Endothelial cell of umbilical vein (primary cell): ENCODE measurements at regions of chr19 and their contacts with region 1.

Region 1: DNA sequence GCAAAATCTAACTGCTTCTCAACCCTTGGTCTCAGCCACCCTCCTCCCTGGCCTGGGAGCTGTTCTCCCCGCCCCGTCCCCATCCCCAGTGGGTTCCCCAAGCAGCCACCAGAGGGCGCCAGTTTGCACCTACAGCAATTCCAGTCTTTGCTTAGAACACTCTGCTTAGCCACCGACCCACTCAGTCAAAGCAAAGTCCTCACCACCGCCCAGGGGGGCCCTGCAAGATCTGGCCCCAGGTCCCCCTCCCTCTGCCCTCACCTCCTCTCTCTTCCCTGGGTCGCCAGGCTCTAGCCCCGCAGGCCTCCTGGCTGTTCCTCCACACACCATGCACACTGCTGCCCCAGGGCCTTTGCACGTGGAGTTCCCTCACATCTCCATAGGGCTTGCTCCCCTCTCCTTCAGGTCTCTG is 12.4 kb downstream of the TMEM143 start:
- DNase-seq: peak; percentile 57
- H3K4me3 ChIP-seq: no peak overlapping the region
- H3K27ac ChIP-seq: no peak overlapping the region
- H3K4me1 ChIP-seq: no peaks in the 10 kb centered on the region
- H3K27me3 ChIP-seq: no peaks in the 10 kb centered on the region
- CTCF ChIP-seq: peak; percentile 82 to 90
- POLR2A ChIP-seq: no peak

Region 2: DNA sequence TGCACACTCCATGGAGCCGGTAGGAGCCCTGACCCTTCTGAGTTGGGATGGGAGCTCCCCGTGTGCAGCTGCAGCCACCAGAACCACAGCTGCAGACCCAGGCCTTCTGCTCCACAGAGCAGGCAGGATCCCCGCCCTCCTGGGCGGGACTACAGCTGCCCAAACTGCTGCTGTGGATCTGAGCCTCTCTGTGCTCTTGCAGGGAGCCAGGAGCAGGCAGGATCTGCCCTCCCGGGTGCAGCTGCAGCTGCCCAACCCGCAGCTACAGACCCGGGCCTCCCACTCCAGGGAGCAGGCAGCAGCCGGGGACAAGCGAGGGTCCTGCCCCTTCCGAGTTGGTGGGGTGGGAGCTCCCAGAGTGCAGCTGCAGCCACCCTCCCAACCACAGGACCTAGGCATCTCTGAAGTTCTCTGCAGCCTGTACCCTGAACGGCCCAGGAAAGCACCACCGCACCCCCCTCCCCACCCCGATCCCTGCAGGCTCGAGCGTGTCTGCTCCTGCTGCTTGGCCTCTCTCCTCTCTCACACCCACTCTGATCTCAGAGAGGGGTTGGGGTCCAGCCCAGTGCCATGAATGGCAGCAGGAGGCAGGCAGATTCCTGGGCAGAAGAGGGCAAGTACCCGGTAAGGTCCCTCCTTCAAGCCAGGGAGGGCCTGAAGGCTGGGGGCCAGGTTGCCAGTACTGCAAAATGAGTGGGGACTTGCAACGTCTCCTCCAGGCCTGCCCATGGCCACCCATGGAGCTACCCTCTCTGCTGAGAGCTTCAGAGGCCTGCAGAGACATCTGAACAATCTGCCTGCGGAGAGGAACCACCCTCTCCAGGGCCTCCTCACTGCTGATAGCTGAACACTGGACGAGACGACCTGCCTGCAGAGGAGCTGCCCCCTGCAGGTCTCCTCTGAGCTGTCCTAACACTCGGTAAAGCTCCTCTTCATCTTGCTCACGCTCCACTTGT is 42.4 kb before region 1 on chr19:
- CTCF ChIA-PET with region 1: interaction called, 12 read pairs
- POLR2A ChIA-PET with region 1: no interaction called
- dilution Hi-C with region 1: no loop called
- intact Hi-C with region 1: no loop called
- DNase-seq: peak; percentile 25
- H3K4me3 ChIP-seq: no peak overlapping the region
- H3K27ac ChIP-seq: no peak overlapping the region
- H3K4me1 ChIP-seq: peaks cover 20% of the 10 kb centered on the region
- H3K27me3 ChIP-seq: peaks cover 4 to 6% of the 10 kb centered on the region in 2 experiments
- CTCF ChIP-seq: peak in 1 of 2 donors; percentile 36
- POLR2A ChIP-seq: no peak

Region 3: DNA sequence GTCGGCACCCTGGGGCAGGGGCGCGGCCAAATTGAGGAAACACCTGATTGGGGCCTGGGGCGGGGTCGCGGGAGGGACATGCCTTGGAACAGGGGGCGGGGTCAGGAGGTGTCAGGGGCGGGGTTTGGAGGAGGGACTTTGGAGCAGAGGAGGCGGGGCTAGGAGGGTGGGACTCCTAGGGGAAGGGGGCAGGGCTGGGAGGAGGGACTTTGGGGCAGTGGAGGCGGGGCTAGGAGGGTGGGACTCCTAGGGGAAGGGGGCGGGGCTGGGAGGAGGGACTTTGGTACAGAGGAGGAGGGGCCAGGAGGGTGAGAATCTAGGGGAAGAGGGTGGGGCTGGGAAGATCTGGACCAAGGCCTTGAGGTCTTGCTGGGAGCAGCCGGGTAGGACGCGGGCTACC is 64.0 kb after region 1 on chr19:
- CTCF ChIA-PET with region 1: no interaction called
- POLR2A ChIA-PET with region 1: no interaction called
- dilution Hi-C with region 1: no loop called
- intact Hi-C with region 1: no loop called
- DNase-seq: peak; percentile 85
- H3K4me3 ChIP-seq: peak overlapping the region in 2 of 3 experiments; percentile 31 to 37
- H3K27ac ChIP-seq: no peak overlapping the region
- H3K4me1 ChIP-seq: peaks cover 6% of the 10 kb centered on the region
- H3K27me3 ChIP-seq: no peaks in the 10 kb centered on the region
- CTCF ChIP-seq: no peak
- POLR2A ChIP-seq: no peak

Region 4: DNA sequence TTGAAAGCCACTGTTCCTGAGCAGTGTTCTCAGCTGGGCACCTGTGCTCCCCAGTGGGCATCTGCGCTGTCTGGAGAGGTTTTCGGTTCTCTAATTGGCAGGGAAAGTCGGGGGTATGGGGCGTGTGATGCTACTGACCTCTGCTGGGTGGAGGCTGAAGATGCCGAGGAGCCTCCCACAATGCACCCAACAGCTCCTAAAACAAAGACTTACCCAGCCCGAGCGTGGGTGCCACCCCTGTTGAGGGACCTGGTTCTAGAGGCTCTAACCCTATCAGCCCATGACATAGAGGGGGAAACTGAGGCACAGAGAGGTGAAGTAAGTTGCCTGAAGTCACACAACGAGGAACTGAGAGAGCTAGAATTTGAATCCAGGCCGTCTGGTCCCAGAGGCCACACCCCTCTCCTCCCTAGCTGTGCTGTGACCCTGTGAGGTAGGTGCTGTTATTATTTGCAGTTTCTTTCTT is 257.5 kb after region 1 on chr19:
- CTCF ChIA-PET with region 1: interaction called, 10 read pairs
- POLR2A ChIA-PET with region 1: no interaction called
- dilution Hi-C with region 1: no loop called
- intact Hi-C with region 1: no loop called
- DNase-seq: no peak
- H3K4me3 ChIP-seq: no peak overlapping the region
- H3K27ac ChIP-seq: no peak overlapping the region
- H3K4me1 ChIP-seq: no peaks in the 10 kb centered on the region
- H3K27me3 ChIP-seq: no peaks in the 10 kb centered on the region
- CTCF ChIP-seq: peak; percentile 39 to 41
- POLR2A ChIP-seq: no peak